ENCODE measurements at regions of chr17 and their contacts with region 1.

Region 1: DNA sequence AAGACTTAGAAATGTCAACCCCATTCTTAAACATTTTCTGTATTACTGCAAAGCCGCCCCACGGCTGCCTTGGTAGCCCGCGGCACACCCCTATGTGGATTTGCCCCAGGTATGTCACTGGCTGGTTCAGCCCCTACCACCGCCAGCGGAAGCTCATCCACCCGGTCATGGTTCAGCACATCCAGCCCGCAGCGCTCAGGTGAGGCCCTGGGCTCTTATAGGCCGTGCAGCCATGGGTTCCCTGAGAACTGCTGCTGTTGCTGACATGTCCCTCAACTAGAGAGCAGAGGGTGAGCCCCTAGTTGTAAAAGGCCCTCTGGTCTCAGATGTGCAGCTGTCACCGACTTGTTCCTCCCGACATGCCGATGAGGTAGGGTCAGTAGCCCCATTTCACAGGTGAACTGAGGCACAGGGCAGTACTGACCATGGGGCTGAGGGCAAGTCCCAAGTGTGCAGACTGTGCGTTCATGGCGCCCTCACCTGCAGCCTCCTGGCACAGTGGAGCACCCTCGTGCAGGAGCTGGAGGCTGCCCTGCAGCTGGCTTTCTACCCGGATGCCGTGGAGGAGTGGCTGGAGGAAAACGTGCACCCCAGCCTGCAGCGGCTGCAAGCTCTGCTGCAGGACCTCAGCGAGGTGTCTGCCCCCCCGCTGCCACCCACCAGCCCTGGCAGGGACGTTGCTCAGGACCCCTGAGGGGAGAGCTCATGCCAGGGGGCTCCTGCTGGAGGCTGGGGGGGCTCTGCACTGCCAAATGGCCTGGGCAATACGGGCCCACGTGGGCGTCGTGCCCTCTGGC is 8.7 kb downstream of the CYBC1 start:
- DNase-seq: no peak
- CTCF ChIP-seq: no peak

Region 2: DNA sequence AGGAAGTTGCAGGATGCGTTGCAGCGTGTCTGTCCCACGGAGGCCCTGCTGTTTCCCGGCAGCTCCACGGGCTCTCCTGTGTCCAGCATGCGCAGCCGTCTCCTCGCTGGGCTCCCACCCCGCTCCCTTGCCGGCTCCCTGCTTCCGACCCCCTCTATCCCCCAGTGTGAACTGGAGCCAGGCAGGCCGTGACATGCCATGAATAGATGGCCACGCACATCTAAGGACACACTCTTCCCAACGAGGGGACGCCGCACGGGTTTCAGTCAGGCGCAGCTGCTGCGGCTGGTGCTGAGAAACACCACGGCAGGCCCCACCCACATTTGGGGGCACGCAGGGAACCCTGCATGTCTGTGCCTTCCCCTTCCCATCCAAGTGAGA is 33.0 kb before region 1 on chr17:
- CTCF ChIA-PET with region 1: no interaction called
- POLR2A ChIA-PET with region 1: no interaction called
- DNase-seq: no peak
- CTCF ChIP-seq: no peak

Region 3: GRCh38 chr17:82424001-82424862 is 17.7 kb before region 1 on chr17:
- CTCF ChIA-PET with region 1: interaction called, 12 read pairs
- POLR2A ChIA-PET with region 1: interaction called, 3 read pairs
- DNase-seq: peak; percentile 64
- CTCF ChIP-seq: peak; percentile 56

Measured in GM10248 (cell line).